ENCODE measurements at regions of chr2 and their contacts with region 1.

Region 1: GRCh38 chr2:197113275-197113711 is 186.8 kb upstream of the PGAP1 start:
- DNase-seq: peak; percentile 44 to 87 (median 82)
- H3K4me3 ChIP-seq: no peak overlapping the region
- H3K27ac ChIP-seq: no peak overlapping the region
- H3K4me1 ChIP-seq: peaks cover 0 to 5% (median 0%) of the 10 kb centered on the region in 4 experiments
- H3K27me3 ChIP-seq: no peaks in the 10 kb centered on the region

Region 2: DNA sequence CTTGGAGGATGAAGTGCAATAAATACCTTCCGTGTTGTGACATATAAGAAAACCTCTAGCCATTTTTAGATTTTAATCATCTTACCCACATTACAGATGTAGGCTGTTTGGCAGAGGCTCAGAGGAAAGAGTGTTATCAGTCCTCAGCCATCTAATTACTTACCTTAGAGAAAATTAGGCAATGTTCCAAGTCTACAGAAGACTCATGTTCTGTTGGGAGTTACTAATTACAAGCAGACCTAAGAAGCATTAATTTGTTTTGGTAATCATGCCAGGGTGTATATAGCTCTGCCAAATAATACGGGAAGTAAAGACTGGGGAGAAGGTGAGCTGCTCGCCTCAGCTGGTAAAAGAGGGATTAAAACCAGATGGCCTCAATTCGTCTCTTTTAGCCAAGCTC is 60.9 kb before region 1 on chr2:
- CTCF ChIA-PET with region 1: no interaction called
- POLR2A ChIA-PET with region 1: no interaction called
- DNase-seq: peak in 2 of 3 donors; percentile 6 to 23
- H3K4me3 ChIP-seq: no peak overlapping the region
- H3K27ac ChIP-seq: no peak overlapping the region
- H3K4me1 ChIP-seq: no peaks in the 10 kb centered on the region
- H3K27me3 ChIP-seq: no peaks in the 10 kb centered on the region

Region 3: DNA sequence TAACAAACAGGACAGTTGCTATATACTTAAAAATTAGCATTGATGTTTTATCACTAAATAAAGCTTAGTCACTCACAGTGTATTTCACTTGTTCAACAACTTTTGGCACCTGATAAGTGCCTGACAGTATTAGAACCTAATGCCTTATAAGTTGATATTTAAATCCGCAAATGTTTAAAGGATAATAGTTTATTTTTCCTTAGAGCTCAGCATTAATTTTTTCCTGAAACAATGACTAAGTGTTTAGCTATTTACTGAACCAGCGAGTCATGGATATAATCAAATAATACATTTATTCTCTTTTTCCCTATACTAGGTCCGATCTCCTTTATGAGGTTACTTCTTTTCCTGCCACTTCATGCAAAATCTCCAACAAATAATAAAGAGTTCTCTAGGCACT is 40.8 kb before region 1 on chr2:
- CTCF ChIA-PET with region 1: no interaction called
- POLR2A ChIA-PET with region 1: no interaction called
- DNase-seq: no peak
- H3K4me3 ChIP-seq: no peak overlapping the region
- H3K27ac ChIP-seq: no peak overlapping the region
- H3K4me1 ChIP-seq: no peaks in the 10 kb centered on the region
- H3K27me3 ChIP-seq: no peaks in the 10 kb centered on the region

Region 4: DNA sequence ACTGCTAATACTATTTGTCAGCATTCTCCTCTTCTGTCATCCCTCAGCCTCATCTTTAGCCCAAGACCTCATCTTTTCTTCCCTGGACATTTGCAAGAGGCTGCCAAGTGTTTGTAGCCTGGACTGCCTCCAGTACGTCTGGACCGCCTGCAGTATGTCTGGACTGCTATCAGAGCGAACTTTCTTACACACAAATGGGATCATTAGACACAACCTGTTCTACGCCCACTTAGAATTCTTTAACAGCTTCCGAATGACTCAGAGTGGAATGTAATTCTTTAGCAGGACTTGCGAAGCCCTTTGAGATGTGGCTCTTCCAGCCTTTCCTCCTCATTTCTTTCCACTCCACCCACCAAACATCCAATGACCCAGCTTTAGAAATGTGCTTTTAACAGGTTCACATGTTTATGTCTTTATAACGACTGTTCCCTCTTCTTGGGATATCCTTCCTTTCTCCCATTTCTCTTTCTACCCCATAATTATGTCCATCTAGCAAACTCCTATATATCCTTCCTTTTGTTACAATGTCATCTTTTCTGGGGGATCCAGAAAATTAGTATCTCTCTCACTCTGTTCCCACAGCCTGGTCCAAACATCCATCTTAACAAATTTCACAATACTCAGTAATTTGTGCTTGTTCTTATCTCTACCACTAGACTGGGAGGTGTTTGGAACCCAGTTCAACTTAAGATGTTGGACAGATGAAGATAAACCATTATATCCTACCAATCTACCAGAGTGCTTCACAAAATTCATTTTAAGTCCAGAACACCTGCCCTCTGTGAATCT is 15.5 kb before region 1 on chr2:
- CTCF ChIA-PET with region 1: interaction called, 16 read pairs
- POLR2A ChIA-PET with region 1: no interaction called
- DNase-seq: no peak
- H3K4me3 ChIP-seq: no peak overlapping the region
- H3K27ac ChIP-seq: no peak overlapping the region
- H3K4me1 ChIP-seq: no peaks in the 10 kb centered on the region
- H3K27me3 ChIP-seq: no peaks in the 10 kb centered on the region

Region 5: DNA sequence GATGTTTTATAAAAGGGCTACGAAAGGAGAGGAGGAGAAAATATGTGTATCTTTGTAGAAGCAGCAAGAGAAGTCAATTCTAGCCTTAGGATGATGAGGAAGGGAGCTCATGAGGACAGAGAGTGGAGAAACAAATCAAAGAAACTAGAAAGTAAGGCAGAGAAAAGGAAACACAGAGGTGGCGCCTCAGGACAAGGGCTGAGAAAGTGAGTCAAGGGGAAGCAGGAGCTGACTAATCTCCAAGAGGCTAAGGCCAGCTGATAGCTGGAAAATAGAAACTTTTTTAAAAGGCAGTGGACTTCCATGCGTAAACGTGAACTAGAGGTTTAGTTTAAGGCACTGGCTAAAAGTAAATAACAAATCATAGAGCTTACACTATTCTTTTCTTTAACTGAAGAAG is 23.9 kb after region 1 on chr2:
- CTCF ChIA-PET with region 1: interaction called, 20 read pairs
- POLR2A ChIA-PET with region 1: no interaction called
- DNase-seq: no peak
- H3K4me3 ChIP-seq: no peak overlapping the region
- H3K27ac ChIP-seq: no peak overlapping the region
- H3K4me1 ChIP-seq: peaks cover 7 to 22% (median 12%) of the 10 kb centered on the region in 4 experiments
- H3K27me3 ChIP-seq: no peaks in the 10 kb centered on the region

Region 6: GRCh38 chr2:197179744-197180498 is 66.6 kb after region 1 on chr2:
- CTCF ChIA-PET with region 1: interaction called, 13 read pairs
- POLR2A ChIA-PET with region 1: no interaction called
- DNase-seq: no peak
- H3K4me3 ChIP-seq: no peak overlapping the region
- H3K27ac ChIP-seq: no peak overlapping the region
- H3K4me1 ChIP-seq: no peaks in the 10 kb centered on the region
- H3K27me3 ChIP-seq: no peaks in the 10 kb centered on the region

Region 7: DNA sequence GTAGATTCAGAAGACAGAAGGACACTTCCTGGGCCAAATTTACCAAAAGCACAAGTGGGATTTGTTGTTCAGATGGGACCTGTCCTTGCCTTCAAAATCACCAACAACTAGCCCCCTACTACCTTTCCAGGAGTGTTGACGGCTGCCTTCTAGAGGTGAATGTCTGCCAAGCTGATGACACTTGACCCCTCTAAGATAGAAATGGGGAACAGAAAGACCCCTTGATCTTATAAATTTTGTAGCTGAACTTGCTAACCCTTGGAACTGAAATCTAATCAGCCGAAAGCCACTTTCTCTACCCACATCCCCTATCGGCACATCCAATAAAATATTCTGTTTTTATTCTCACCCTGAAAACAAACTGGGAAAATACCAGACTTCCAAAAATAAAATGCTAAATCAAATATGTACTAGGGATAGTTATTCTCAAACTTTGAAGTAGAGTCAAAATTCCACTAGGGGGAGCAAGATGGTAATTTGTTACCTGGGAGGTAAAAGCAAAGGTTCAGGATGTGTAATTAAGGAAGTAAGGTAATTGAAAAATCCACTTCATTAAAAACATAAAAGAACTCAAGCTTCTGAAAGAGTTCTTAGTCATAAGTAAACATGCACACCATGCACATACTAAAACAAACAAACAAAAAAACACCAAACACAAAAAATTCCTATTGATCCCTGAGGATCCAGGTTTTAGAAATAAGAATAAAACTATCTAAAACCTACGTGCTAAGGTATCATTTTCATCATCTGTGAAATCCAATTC is 78.1 kb after region 1 on chr2:
- CTCF ChIA-PET with region 1: interaction called, 19 read pairs
- POLR2A ChIA-PET with region 1: no interaction called
- DNase-seq: peak; percentile 74 to 80 (median 75)
- H3K4me3 ChIP-seq: no peak overlapping the region
- H3K27ac ChIP-seq: no peak overlapping the region
- H3K4me1 ChIP-seq: peaks cover 8 to 22% (median 16%) of the 10 kb centered on the region in 4 experiments
- H3K27me3 ChIP-seq: no peaks in the 10 kb centered on the region

Region 8: GRCh38 chr2:197310271-197310985 is 197.1 kb after region 1 on chr2 and contains the start of gene ANKRD44:
- CTCF ChIA-PET with region 1: interaction called, 18 read pairs
- POLR2A ChIA-PET with region 1: no interaction called
- DNase-seq: peak; percentile 86 to 93 (median 90)
- H3K4me3 ChIP-seq: peak within 1 kb of the TSS; percentile 71 to 90 (median 84)
- H3K27ac ChIP-seq: peak within 1 kb of the TSS; percentile 36 to 76
- H3K4me1 ChIP-seq: peaks cover 32 to 58% (median 49%) of the 10 kb centered on the region in 4 experiments
- H3K27me3 ChIP-seq: no peaks in the 10 kb centered on the region

Region 9: DNA sequence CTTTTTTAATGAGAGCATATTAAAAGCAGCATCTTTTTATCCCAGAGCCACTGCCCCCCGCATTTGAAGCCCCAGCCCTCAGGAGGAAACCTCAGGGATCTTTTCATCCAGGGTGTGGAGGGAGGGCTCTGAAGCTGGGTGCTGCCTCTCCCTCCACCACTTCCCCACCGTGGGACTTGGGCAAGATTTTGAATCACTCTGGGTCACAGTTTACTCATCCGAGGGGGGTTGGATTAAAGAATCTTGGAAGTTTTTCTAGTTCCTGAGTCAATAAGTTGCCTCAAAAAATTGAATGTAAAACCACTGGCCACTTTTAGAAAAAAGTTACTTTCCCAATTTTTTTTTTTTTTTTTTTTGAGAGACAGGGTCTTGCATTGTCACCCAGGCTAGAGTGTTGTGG is 259.3 kb after region 1 on chr2:
- CTCF ChIA-PET with region 1: interaction called, 26 read pairs
- POLR2A ChIA-PET with region 1: no interaction called
- DNase-seq: no peak
- H3K4me3 ChIP-seq: no peak overlapping the region
- H3K27ac ChIP-seq: no peak overlapping the region
- H3K4me1 ChIP-seq: peaks cover 3 to 19% (median 16%) of the 10 kb centered on the region in 4 experiments
- H3K27me3 ChIP-seq: no peaks in the 10 kb centered on the region

Measured in common myeloid progenitor, CD34-positive (primary cell).